Panc1 (cell line): ENCODE measurements at regions of chr17 and their contacts with region 1.

Region 1: DNA sequence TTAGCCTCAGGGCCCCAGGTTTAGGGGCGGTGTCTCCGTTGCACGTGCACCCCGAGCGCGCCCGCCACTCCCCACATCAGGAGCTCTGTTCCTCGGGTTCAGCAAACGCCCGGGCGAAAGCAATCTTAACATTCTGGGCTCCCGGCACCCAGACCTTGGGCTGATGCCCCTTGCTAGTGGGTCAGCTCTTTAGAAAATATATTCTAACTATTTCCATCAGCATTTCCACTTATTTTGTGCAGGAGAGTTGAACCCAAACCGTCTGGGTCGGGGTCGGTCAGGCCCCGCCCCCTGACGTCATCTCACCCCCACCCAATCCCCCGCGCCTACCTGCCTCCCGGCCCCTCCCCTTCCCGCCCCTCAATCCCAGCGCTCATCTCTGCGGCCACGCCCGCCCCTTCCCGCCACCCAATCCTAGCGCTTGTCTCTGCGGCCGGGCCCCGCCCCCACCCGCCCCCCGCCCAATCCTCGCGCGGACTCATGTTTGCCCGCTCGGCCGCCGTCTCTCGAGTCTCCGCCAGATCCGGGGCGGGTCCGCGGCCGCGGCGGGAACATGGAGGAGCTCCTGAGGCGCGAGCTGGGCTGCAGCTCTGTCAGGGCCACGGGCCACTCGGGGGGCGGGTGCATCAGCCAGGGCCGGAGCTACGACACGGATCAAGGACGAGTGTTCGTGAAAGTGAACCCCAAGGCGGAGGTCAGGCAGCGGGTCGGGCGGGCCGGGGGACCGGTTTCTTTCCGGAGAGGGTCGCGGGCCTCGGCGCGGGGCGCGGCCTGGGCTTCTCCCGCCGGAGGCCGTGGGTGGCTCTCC is at the start of gene FN3KRP:
- DNase-seq: peak; percentile 55
- ATAC-seq: peak; percentile 93
- H3K4me3 ChIP-seq: peak within 1 kb of the TSS; percentile 79 to 91
- H3K27ac ChIP-seq: peak within 1 kb of the TSS; percentile 74
- H3K4me1 ChIP-seq: peaks cover 3% of the 10 kb centered on the region; the same call in 1 of the 2 replicates
- H3K27me3 ChIP-seq: no peaks in the 10 kb centered on the region
- CTCF ChIP-seq: no peak
- total RNA-seq, gene FN3KRP: 41.0 TPM

Region 2: DNA sequence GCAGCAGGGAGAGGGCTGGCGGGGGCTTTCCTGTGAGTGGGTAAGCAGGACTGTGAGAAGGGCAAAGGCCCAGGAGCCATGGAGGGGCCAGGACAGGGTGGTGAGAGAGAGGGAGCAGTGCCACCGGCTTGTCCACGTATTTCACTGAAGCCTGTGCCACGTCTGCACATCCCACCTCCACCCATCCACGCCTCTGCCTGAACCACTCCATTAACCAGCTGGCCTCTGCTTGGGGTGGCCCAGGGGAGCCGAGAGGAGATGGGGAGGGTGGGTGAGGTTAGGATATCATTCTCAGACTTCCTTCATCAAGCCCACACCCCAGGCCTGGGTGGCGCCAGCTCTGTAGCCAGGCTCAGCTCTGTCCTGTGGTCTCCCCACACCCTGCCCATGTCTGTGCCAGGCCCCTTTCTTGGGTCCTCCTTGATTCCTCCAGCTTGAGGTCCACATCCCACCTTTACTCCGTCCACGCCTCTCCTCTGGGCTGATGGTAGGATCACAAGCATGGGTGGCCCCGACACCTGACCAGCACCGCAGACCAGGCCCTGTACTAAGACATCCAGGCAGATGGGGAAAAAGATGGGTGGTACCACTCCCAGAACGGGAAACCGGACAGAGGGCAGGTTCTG is 15.8 kb after region 1 on chr17:
- CTCF ChIA-PET with region 1: no interaction called
- POLR2A ChIA-PET with region 1: no interaction called
- in situ Hi-C with region 1: no loop called
- intact Hi-C with region 1: no loop called
- DNase-seq: no peak
- ATAC-seq: no peak
- H3K4me3 ChIP-seq: no peak overlapping the region
- H3K27ac ChIP-seq: no peak overlapping the region
- H3K4me1 ChIP-seq: no peaks in the 10 kb centered on the region
- H3K27me3 ChIP-seq: no peaks in the 10 kb centered on the region
- CTCF ChIP-seq: no peak

Region 3: DNA sequence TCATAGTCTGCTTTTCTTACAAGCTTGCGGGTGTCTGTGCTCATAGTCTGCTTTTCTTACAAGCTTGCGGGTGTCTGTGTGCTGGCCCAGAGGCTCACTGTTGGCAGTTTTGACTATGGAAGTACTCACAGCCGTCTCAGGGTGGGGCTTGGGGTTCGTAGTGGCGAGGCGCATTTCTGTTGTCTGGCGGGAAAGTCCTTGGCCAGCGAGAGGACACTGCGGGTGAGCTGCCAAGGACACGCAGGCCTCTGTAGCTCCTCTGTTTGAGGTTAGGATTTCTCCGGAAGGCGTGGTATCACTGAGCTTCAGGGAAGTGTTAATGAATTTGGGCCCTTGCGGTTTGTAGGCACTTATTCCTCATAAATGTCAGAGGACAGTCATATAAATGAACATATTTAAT is 49.0 kb after region 1 on chr17:
- CTCF ChIA-PET with region 1: interaction called, 11 read pairs
- POLR2A ChIA-PET with region 1: no interaction called
- in situ Hi-C with region 1: no loop called
- intact Hi-C with region 1: no loop called
- DNase-seq: no peak
- ATAC-seq: no peak
- H3K4me3 ChIP-seq: no peak overlapping the region
- H3K27ac ChIP-seq: no peak overlapping the region
- H3K4me1 ChIP-seq: no peaks in the 10 kb centered on the region
- H3K27me3 ChIP-seq: no peaks in the 10 kb centered on the region
- CTCF ChIP-seq: no peak

Region 4: GRCh38 chr17:82859431-82860403 is 143.3 kb after region 1 on chr17:
- CTCF ChIA-PET with region 1: no interaction called
- POLR2A ChIA-PET with region 1: no interaction called
- in situ Hi-C with region 1: no loop called
- intact Hi-C with region 1: no loop called
- DNase-seq: no peak
- ATAC-seq: peak; percentile 19; the same call in 1 of the 2 replicates
- H3K4me3 ChIP-seq: no peak overlapping the region
- H3K27ac ChIP-seq: peak overlapping the region; percentile 25; the same call in 1 of the 2 replicates
- H3K4me1 ChIP-seq: peaks cover 17% of the 10 kb centered on the region
- H3K27me3 ChIP-seq: no peaks in the 10 kb centered on the region
- CTCF ChIP-seq: no peak